CD8-positive, alpha-beta T cell (primary cell): ENCODE measurements at regions of chr14 and their contacts with region 1.

Region 1: GRCh38 chr14:29911815-29912214 is 15.8 kb downstream of the PRKD1 start:
- DNase-seq: no peak
- ATAC-seq: no peak
- H3K4me3 ChIP-seq: no peak overlapping the region
- H3K4me3 Mint-ChIP-seq: no peak overlapping the region
- H3K27ac ChIP-seq: no peak overlapping the region
- H3K27ac Mint-ChIP-seq: no peak overlapping the region
- H3K4me1 ChIP-seq: no peaks in the 10 kb centered on the region
- H3K4me1 Mint-ChIP-seq: no peaks in the 10 kb centered on the region
- H3K27me3 ChIP-seq: no peaks in the 10 kb centered on the region
- H3K27me3 Mint-ChIP-seq: no peaks in the 10 kb centered on the region
- CTCF ChIP-seq: no peak

Region 2: DNA sequence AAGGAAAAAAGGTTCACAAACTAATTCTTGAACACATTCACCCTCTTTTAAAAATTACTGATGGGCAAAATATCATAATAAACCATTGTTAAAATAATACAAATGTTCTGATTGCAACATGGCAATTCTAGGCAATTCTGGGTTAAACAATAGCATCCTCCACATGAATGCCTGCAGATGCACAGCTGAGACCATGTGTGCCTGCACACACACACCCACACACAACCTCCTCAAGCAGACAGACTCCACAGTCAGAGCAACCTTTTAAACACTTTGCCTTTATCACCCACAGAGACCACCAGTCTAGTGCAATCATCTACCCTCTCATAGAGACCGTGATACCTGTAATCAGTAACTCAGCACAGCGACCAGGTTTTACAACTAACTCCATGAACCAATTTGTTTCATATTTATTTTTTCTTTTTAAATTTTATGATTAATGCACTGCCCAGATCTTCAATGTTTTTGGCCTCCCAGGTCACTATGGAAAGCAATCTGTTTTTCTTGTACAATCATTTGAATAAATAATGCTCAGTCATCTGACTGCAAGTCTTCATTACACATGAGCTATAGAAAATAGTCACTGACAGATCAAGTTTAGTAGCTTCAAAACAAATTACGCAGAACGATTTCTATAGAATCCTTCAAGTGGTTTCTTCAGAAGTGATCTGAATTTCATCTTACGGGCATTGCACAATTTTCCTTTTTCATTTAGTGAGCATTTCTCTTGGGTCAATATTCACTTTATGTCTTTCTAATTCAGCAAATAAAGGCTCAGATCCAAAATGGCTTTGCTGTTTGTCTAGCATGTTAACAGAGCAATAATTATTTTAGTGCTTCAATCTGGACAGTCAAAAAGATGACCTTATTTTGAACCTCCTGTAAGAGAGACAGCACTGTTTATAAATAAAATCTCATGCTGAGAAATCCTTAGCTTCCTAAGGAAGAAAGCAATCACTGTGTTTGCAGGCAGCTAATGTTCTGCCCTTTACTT is 89.9 kb before region 1 on chr14:
- CTCF ChIA-PET with region 1: no interaction called
- POLR2A ChIA-PET with region 1: no interaction called
- intact Hi-C with region 1: no loop called
- DNase-seq: no peak
- ATAC-seq: no peak
- H3K4me3 ChIP-seq: no peak overlapping the region
- H3K4me3 Mint-ChIP-seq: no peak overlapping the region
- H3K27ac ChIP-seq: no peak overlapping the region
- H3K27ac Mint-ChIP-seq: no peak overlapping the region
- H3K4me1 ChIP-seq: no peaks in the 10 kb centered on the region
- H3K4me1 Mint-ChIP-seq: no peaks in the 10 kb centered on the region
- H3K27me3 ChIP-seq: no peaks in the 10 kb centered on the region
- H3K27me3 Mint-ChIP-seq: no peaks in the 10 kb centered on the region
- CTCF ChIP-seq: no peak

Region 3: DNA sequence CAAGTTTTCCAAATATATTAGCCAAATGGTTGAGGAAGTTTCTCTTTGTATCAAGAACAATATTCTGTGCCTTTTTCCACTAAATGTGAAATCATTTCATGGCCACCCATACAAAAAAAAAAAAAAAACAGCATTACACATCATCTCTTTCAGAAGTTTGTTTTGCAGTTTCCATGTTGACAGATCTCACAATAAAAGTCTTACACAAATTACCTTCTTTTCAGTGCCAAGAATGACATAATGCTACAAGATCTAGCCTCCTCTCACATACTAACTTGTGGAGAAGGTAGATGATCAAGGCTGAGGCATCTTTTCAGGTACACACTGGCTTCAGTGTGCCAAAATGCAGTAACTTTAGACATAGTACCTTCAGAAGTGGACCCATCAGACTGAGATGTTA is 19.5 kb before region 1 on chr14:
- CTCF ChIA-PET with region 1: no interaction called
- POLR2A ChIA-PET with region 1: no interaction called
- intact Hi-C with region 1: loop called in 1 of 2 experiments (anchors 2 kb)
- DNase-seq: no peak
- ATAC-seq: no peak
- H3K4me3 ChIP-seq: no peak overlapping the region
- H3K4me3 Mint-ChIP-seq: no peak overlapping the region
- H3K27ac ChIP-seq: no peak overlapping the region
- H3K27ac Mint-ChIP-seq: no peak overlapping the region
- H3K4me1 ChIP-seq: no peaks in the 10 kb centered on the region
- H3K4me1 Mint-ChIP-seq: no peaks in the 10 kb centered on the region
- H3K27me3 ChIP-seq: no peaks in the 10 kb centered on the region
- H3K27me3 Mint-ChIP-seq: no peaks in the 10 kb centered on the region
- CTCF ChIP-seq: no peak

Region 4: GRCh38 chr14:30005114-30005808 is 93.4 kb after region 1 on chr14:
- CTCF ChIA-PET with region 1: no interaction called
- POLR2A ChIA-PET with region 1: no interaction called
- intact Hi-C with region 1: no loop called
- DNase-seq: no peak
- ATAC-seq: no peak
- H3K4me3 ChIP-seq: no peak overlapping the region
- H3K4me3 Mint-ChIP-seq: no peak overlapping the region
- H3K27ac ChIP-seq: no peak overlapping the region
- H3K27ac Mint-ChIP-seq: no peak overlapping the region
- H3K4me1 ChIP-seq: no peaks in the 10 kb centered on the region
- H3K4me1 Mint-ChIP-seq: no peaks in the 10 kb centered on the region
- H3K27me3 ChIP-seq: no peaks in the 10 kb centered on the region
- H3K27me3 Mint-ChIP-seq: no peaks in the 10 kb centered on the region
- CTCF ChIP-seq: no peak